ENCODE measurements at regions of chr10 and their contacts with region 1.

Region 1: DNA sequence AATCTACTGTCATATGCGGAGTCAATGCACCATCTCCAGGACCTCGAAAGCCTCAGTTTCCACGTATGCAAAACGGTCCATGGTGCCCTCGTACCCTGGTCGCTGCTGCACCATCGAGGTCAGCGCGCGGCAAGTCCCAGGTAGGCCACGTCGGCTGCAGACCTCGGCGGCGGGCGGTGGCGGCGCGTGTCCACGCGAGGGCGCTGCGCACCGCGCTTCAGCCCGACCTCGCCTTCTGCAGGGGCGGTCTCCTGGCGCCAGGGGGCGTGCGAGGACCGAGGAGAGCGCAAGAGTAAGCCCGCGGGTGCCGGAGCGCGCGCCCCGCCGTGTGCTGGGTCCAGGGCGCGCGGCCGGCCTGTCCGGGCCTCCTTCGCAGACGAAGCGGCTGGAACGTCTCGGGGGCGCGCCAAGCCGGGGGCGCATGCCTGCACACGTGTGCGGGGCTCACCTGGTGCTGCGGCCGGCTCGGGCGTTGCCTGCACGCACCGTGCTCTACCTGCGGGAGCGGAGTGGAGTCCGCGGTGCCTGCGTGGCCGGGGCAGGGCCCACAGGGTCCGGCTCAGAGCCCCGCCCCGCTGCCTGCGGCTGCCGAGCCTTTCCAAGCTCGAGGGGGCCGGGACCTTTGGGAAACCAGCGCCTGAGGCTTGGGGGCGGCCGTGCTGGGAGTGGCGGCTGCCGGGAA is 54.0 kb downstream of the GLRX3 start:
- DNase-seq: no peak
- H3K4me3 ChIP-seq: peak overlapping the region; percentile 51 to 58
- H3K27ac ChIP-seq: no peak overlapping the region
- H3K4me1 ChIP-seq: peaks cover 12% of the 10 kb centered on the region
- H3K27me3 ChIP-seq: no peaks in the 10 kb centered on the region
- CTCF ChIP-seq: peak; percentile 99 to 100 (median 100)
- POLR2A ChIP-seq: no peak

Region 2: DNA sequence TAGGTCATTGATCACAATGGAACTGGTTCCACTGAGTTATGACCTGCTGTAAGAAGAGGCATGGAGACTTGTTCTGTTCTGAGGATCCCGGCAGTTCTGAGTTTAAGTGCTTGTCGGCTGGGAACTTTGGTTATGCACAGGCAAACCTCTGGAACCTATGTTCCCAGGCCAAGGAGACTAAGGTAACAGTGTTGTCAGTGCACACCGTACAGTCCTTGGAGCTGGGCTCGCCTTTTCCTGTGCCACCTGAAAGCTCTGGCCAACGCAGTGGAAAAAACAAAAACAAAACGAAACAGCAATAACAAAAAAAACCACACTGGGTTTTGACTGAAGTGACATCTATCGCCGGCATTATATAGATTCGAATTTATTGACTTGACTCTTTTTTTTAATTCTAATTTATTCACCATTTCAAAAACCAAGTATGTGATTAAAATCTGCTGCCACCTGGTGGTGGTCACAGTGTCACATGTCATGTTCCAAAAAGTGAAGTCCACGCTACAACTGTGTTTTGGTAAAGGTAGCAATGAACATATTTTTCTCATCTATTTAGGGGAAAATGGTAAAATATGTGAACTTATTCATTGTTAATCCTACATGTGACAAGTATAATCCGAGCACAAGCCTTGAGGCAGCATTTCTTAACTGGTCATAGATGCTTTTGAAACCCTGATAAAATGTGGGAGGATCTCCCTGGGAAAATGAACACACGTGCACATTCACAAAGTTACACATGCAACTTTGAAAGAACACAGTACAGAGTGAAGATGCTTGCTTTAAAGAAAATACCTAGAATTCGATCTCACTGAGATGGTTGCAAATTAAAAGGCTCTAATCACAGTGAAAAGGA is 1596.8 kb after region 1 on chr10:
- intact Hi-C with region 1: loop called (anchors 10 kb)
- DNase-seq: peak in 1 of 2 donors; percentile 28
- H3K4me3 ChIP-seq: no peak overlapping the region
- H3K27ac ChIP-seq: no peak overlapping the region
- H3K4me1 ChIP-seq: no peaks in the 10 kb centered on the region
- H3K27me3 ChIP-seq: no peaks in the 10 kb centered on the region
- CTCF ChIP-seq: peak; percentile 32 to 54 (median 52)
- POLR2A ChIP-seq: no peak

Measured in vagina (tissue), 2 donors.